ENCODE measurements at regions of chr5 and their contacts with region 1.

Region 1: GRCh38 chr5:76544268-76544926 is 78.8 kb downstream of the F2RL2 start:
- DNase-seq: peak in 8 of 9 donors; percentile 37 to 69 (median 58)
- ATAC-seq: peak; percentile 31
- H3K4me3 ChIP-seq: peak overlapping the region; percentile 33
- H3K4me3 Mint-ChIP-seq: peak overlapping the region; percentile 43 to 80 (median 74)
- H3K27ac ChIP-seq: peak overlapping the region; percentile 73
- H3K27ac Mint-ChIP-seq: peak overlapping the region; percentile 93 to 98 (median 96)
- H3K4me1 ChIP-seq: peaks cover 57 to 86% of the 10 kb centered on the region in 2 donors
- H3K4me1 Mint-ChIP-seq: peaks cover 64 to 89% (median 84%) of the 10 kb centered on the region in 7 donors
- H3K27me3 ChIP-seq: no peaks in the 10 kb centered on the region
- H3K27me3 Mint-ChIP-seq: no peaks in the 10 kb centered on the region

Region 2: GRCh38 chr5:76074487-76075065 is 469.8 kb before region 1 on chr5:
- CTCF ChIA-PET with region 1: no interaction called
- POLR2A ChIA-PET with region 1: no interaction called
- intact Hi-C with region 1: loop called in 1 of 2 experiments (anchors 2 kb)
- DNase-seq: peak in 4 of 9 donors; percentile 8 to 13 (median 10)
- ATAC-seq: peak; percentile 61
- H3K4me3 ChIP-seq: no peak overlapping the region
- H3K4me3 Mint-ChIP-seq: no peak overlapping the region
- H3K27ac ChIP-seq: no peak overlapping the region
- H3K27ac Mint-ChIP-seq: no peak overlapping the region
- H3K4me1 ChIP-seq: no peaks in the 10 kb centered on the region
- H3K4me1 Mint-ChIP-seq: no peaks in the 10 kb centered on the region
- H3K27me3 ChIP-seq: no peaks in the 10 kb centered on the region
- H3K27me3 Mint-ChIP-seq: peaks cover 51 to 73% (median 63%) of the 10 kb centered on the region in 5 donors

Region 3: DNA sequence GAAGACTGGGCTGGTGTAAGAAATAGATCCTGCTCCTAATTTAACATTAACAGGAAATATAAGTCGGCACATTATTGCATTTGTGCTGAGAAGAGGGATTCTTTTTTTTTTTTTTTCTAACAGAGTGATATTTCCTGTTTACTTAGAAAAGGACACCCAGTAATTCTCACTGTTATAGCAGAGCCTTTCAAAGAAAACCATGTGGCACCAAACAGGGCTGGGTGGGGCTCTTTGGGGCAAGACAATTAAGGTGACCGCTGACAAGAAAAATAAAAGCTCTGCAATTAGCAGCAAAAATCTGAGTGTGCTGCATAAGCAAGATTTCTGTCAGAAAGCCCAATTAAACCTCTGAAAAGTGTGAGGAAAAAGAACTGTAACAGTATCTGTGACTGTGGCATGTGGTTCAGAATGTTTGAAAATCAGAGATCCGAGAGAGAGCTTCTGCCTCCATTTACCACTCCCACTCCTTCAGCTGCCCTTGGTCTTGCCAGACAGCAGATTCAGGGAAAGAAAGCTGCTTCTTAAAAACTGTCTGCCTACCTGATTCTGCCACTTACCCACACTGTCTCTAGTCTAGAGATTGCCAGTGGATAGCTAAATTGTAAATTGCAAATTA is 218.4 kb before region 1 on chr5:
- CTCF ChIA-PET with region 1: no interaction called
- POLR2A ChIA-PET with region 1: interaction called, 12 read pairs
- intact Hi-C with region 1: loop called in 1 of 2 experiments (anchors 1 kb)
- DNase-seq: peak in 6 of 9 donors; percentile 30 to 63 (median 48)
- ATAC-seq: peak; percentile 90
- H3K4me3 ChIP-seq: peak overlapping the region; percentile 22
- H3K4me3 Mint-ChIP-seq: peak overlapping the region; percentile 71 to 84 (median 76)
- H3K27ac ChIP-seq: peak overlapping the region; percentile 59
- H3K27ac Mint-ChIP-seq: peak overlapping the region; percentile 88 to 98 (median 93)
- H3K4me1 ChIP-seq: peaks cover 31 to 57% of the 10 kb centered on the region in 2 donors
- H3K4me1 Mint-ChIP-seq: peaks cover 46 to 75% (median 58%) of the 10 kb centered on the region in 7 donors
- H3K27me3 ChIP-seq: no peaks in the 10 kb centered on the region
- H3K27me3 Mint-ChIP-seq: no peaks in the 10 kb centered on the region

Region 4: GRCh38 chr5:76473661-76474060 is 70.7 kb before region 1 on chr5:
- CTCF ChIA-PET with region 1: interaction called, 14 read pairs
- POLR2A ChIA-PET with region 1: interaction called, 5 read pairs
- intact Hi-C with region 1: loop called (anchors 1 kb)
- DNase-seq: peak; percentile 13 to 89 (median 83)
- ATAC-seq: peak; percentile 95
- H3K4me3 ChIP-seq: no peak overlapping the region
- H3K4me3 Mint-ChIP-seq: peak overlapping the region; percentile 19 to 78 (median 58)
- H3K27ac ChIP-seq: peak overlapping the region; percentile 59
- H3K27ac Mint-ChIP-seq: peak overlapping the region; percentile 72 to 98 (median 93)
- H3K4me1 ChIP-seq: peaks cover 54 to 67% of the 10 kb centered on the region in 2 donors
- H3K4me1 Mint-ChIP-seq: peaks cover 56 to 88% (median 79%) of the 10 kb centered on the region in 7 donors
- H3K27me3 ChIP-seq: no peaks in the 10 kb centered on the region
- H3K27me3 Mint-ChIP-seq: no peaks in the 10 kb centered on the region

Region 5: GRCh38 chr5:76715736-76716455 is 171.5 kb after region 1 on chr5 and contains the start of gene F2R:
- CTCF ChIA-PET with region 1: no interaction called
- POLR2A ChIA-PET with region 1: no interaction called
- intact Hi-C with region 1: loop called in 1 of 2 experiments (anchors 5 kb)
- DNase-seq: peak in 8 of 9 donors; percentile 17 to 56 (median 21)
- ATAC-seq: peak; percentile 90
- H3K4me3 ChIP-seq: peak within 1 kb of the TSS; percentile 82
- H3K4me3 Mint-ChIP-seq: peak within 1 kb of the TSS; percentile 48 to 88 (median 82)
- H3K27ac ChIP-seq: no peak within 1 kb of the TSS
- H3K27ac Mint-ChIP-seq: peak within 1 kb of the TSS in 3 of 9 donors; percentile 11 to 79 (median 71)
- H3K4me1 ChIP-seq: peaks cover 16 to 17% of the 10 kb centered on the region in 2 donors
- H3K4me1 Mint-ChIP-seq: peaks cover 11 to 36% (median 27%) of the 10 kb centered on the region in 7 donors
- H3K27me3 ChIP-seq: peaks cover 0 to 17% of the 10 kb centered on the region in 2 donors
- H3K27me3 Mint-ChIP-seq: peaks cover 35 to 42% (median 40%) of the 10 kb centered on the region in 5 donors
- total RNA-seq, gene F2R: 0.65 to 8.2 (median 1.2) TPM

Region 6: DNA sequence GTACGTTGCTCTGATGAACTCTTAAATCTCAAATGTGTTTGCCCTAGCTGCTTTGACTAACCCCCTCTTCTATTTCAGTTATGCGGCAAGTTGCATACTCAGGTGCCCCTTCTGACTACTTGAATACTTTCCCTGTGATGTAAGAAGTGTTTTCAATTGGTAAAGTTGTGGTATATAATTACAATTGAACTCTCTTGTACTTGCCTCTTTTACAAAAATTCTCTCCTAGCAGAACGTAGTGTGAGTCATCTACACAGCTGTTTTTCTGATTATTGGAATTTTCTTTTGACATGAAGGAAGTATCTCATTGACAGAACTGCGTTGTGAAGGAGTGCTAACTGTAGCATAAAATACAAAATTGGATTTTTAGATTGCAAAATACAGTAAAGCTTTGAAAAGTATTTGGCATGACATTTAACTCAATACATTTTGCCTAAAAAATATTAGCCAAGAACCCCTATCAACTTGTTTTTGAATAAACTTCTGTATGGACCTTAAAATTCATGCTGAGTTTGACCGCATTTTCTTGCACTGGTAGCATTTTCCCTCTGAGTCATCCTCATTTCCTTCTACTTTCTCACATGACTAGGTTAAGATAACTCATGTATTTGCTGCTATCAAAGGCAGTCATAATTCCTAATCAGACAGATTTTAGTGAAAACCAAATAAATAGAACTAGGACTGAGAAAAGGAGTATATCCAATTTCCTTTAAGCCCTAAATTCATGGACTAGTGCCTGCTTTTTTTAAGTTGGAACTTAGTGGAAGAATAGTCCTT is 414.8 kb after region 1 on chr5:
- CTCF ChIA-PET with region 1: no interaction called
- POLR2A ChIA-PET with region 1: no interaction called
- intact Hi-C with region 1: no loop called
- DNase-seq: no peak
- ATAC-seq: no peak
- H3K4me3 ChIP-seq: no peak overlapping the region
- H3K4me3 Mint-ChIP-seq: peak overlapping the region in 1 of 10 donors; percentile 1
- H3K27ac ChIP-seq: no peak overlapping the region
- H3K27ac Mint-ChIP-seq: no peak overlapping the region
- H3K4me1 ChIP-seq: no peaks in the 10 kb centered on the region
- H3K4me1 Mint-ChIP-seq: peaks cover 0 to 22% (median 4%) of the 10 kb centered on the region in 7 donors
- H3K27me3 ChIP-seq: no peaks in the 10 kb centered on the region
- H3K27me3 Mint-ChIP-seq: peaks cover 22 to 41% (median 27%) of the 10 kb centered on the region in 5 donors

Region 7: DNA sequence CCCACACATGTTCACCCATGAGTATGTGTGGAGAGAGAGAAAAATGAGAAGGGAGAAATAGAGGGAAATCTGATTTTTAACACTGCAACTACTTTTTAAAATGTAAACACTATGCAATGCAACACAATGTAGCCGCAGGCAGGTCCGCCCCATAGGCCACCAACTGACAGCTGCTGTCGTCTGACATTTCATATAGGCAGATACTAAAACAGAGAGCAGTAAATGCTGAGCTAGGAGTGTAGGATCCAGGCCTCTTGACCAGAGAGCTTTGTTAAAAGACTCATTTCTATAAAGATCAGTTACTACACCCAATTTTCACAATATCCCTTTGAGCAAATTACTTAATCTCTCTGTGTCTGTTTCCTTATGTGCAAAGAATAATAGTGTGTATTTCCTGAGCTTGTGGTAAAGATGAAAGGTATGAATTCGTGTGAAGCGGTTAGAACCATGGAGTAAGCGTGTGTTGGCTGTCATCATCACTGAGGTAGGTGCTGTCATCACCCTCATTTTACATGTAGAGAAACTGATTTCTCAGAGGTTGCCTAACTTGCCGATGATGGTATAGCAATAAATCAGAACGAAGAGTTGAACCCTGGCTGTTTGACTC is 610.9 kb after region 1 on chr5:
- CTCF ChIA-PET with region 1: no interaction called
- POLR2A ChIA-PET with region 1: no interaction called
- intact Hi-C with region 1: loop called in 1 of 2 experiments (anchors 10 kb)
- DNase-seq: peak in 7 of 9 donors; percentile 81 to 94 (median 91)
- ATAC-seq: peak; percentile 96
- H3K4me3 ChIP-seq: no peak overlapping the region
- H3K4me3 Mint-ChIP-seq: peak overlapping the region in 9 of 10 donors; percentile 22 to 83 (median 60)
- H3K27ac ChIP-seq: peak overlapping the region; percentile 67
- H3K27ac Mint-ChIP-seq: peak overlapping the region in 8 of 9 donors; percentile 74 to 99 (median 96)
- H3K4me1 ChIP-seq: peaks cover 0 to 27% of the 10 kb centered on the region in 2 donors
- H3K4me1 Mint-ChIP-seq: peaks cover 17 to 40% (median 33%) of the 10 kb centered on the region in 7 donors
- H3K27me3 ChIP-seq: no peaks in the 10 kb centered on the region
- H3K27me3 Mint-ChIP-seq: peaks cover 0 to 12% (median 3%) of the 10 kb centered on the region in 5 donors